BJ (cell line): ENCODE measurements at regions of chr15 and their contacts with region 1.

Region 1: GRCh38 chr15:31236184-31237042 is 90.2 kb upstream of the KLF13 start:
- DNase-seq: peak; percentile 69
- H3K4me3 ChIP-seq: no peak overlapping the region
- H3K27me3 ChIP-seq: no peaks in the 10 kb centered on the region
- CTCF ChIP-seq: no peak

Region 2: GRCh38 chr15:31136016-31136415 is 100.4 kb before region 1 on chr15:
- CTCF ChIA-PET with region 1: no interaction called
- POLR2A ChIA-PET with region 1: no interaction called
- DNase-seq: no peak
- H3K4me3 ChIP-seq: no peak overlapping the region
- H3K27me3 ChIP-seq: peaks cover 5% of the 10 kb centered on the region
- CTCF ChIP-seq: no peak

Region 3: GRCh38 chr15:31254431-31255175 is 18.2 kb after region 1 on chr15:
- CTCF ChIA-PET with region 1: interaction called, 18 read pairs
- POLR2A ChIA-PET with region 1: no interaction called
- DNase-seq: peak; percentile 91
- H3K4me3 ChIP-seq: no peak overlapping the region
- H3K27me3 ChIP-seq: peaks cover 20% of the 10 kb centered on the region
- CTCF ChIP-seq: peak; percentile 37

Region 4: DNA sequence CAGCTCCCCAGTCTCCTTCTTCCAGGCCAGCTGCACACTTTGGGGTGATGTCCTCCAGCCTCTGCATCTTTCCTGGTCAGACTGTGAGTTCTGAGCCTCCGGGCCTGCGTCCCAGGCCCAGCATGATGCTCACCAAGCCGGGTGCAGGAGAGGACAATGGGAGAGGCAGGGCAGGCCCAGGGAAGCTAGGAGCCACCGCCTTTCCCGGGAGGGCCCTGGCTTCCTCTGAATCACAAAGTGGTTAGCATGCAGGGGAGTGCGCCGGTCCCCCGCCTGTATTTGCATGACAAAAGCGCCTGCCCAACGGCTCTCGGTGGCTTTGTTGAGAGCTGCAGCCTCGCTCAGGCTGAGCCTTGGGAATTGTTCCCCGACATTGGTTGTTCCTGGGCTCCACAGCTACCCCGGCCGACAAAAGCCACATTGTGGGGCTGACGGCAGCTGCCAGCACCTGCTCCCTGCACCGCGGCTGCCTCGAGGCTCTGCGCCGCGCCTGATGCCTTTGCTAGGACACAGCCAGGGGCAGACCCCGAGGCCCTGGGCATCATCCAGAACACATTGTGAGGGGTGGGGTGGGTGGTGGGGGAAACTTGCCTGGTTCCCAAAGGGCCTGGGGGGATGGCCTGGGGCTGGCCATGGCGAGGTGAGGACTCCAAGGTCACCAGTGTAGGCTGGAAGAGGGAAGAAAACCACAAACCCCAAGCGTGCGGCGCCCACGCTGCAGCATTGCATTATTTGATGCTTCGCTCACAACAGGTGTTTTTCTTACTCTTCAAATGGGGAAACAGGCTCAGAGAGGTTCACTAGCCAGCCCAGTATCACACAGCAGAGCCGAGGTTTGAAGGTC is 70.2 kb after region 1 on chr15:
- CTCF ChIA-PET with region 1: no interaction called
- POLR2A ChIA-PET with region 1: no interaction called
- DNase-seq: no peak
- H3K4me3 ChIP-seq: no peak overlapping the region
- H3K27me3 ChIP-seq: peaks cover 7% of the 10 kb centered on the region; the same call in 1 of the 2 replicates
- CTCF ChIP-seq: no peak